ENCODE measurements at regions of chr13 and their contacts with region 1.

Region 1: GRCh38 chr13:79681069-79681468 is 200.1 kb downstream of the NDFIP2 start:
- DNase-seq: peak in 1 of 2 donors; percentile 21
- H3K4me3 ChIP-seq: no peak overlapping the region
- H3K27ac ChIP-seq: no peak overlapping the region
- H3K4me1 ChIP-seq: no peaks in the 10 kb centered on the region
- H3K27me3 ChIP-seq: no peaks in the 10 kb centered on the region
- CTCF ChIP-seq: no peak
- EP300 ChIP-seq: no peak
- POLR2A ChIP-seq: no peak

Region 2: DNA sequence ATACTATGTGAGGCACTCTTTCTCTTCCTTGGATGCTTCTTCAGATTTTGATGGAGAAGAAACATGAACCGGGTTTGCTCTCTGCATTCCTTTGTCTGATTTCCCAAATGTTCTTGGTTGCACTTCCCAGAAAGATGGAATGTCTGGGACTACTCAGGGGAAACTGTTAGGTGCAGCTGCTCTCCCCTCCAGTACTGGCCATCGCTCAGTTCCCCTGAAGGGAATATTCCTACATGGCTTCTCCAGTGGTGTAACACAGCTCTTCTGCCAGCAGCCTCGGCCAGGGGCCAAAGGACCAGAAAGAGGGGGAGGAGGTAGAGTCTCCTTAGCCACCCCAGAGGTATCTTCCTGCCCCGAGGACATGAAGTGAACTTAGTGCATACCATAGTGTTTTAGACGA is 693.4 kb after region 1 on chr13:
- intact Hi-C with region 1: loop called (anchors 5 kb)
- DNase-seq: peak in 1 of 2 donors; percentile 44
- H3K4me3 ChIP-seq: no peak overlapping the region
- H3K27ac ChIP-seq: no peak overlapping the region
- H3K4me1 ChIP-seq: no peaks in the 10 kb centered on the region
- H3K27me3 ChIP-seq: no peaks in the 10 kb centered on the region
- CTCF ChIP-seq: no peak
- EP300 ChIP-seq: no peak
- POLR2A ChIP-seq: no peak